Gastrocnemius medialis (tissue), 4 donors: ENCODE measurements at regions of chr3 and their contacts with region 1.

Region 1: DNA sequence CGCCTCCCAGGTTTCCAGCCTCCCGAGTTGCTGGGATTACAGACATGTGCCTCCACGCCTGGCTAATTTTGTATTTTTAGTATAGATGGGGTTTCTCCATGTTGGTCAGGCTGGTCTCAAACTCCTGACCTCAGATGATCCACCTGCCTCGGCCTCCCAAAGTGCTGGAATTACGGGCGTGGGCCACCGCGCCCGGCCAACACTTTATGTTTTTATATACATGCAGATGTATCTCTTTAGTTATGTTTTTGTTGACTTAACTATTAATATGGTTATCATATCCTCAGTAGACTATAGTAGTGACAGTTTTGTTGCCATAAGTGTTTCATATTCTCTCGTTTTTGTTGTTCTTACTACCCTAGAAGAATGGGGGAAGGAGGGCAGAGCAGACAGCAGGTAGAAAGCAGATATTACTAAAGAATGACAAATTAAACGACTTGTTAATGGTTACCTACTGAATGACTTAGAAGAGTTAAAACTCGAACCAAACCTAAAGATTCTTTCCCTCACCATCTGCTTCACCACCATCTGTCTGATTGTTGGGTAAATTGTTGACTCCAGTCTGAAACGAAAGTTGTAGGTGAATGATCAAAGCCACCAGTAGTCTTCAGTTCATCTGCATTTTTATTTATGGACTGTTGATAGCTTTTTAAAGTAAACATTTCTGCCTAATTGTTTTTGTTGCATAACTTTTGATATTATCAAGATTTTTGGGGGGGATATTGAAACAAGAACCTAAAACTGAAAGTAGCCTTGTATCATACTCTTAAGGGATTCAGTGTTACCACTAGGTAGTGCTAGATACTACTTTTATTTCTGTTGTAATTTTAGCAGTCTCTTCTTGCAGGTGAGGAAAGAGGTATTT is 89.3 kb downstream of the RASA2 start:
- DNase-seq: no peak
- ATAC-seq: no peak
- H3K4me3 ChIP-seq: no peak overlapping the region
- H3K27ac ChIP-seq: no peak overlapping the region
- H3K4me1 ChIP-seq: no peaks in the 10 kb centered on the region
- H3K27me3 ChIP-seq: no peaks in the 10 kb centered on the region
- CTCF ChIP-seq: peak in 2 of 5 experiments; percentile 34 to 41
- POLR2A ChIP-seq: no peak

Region 2: DNA sequence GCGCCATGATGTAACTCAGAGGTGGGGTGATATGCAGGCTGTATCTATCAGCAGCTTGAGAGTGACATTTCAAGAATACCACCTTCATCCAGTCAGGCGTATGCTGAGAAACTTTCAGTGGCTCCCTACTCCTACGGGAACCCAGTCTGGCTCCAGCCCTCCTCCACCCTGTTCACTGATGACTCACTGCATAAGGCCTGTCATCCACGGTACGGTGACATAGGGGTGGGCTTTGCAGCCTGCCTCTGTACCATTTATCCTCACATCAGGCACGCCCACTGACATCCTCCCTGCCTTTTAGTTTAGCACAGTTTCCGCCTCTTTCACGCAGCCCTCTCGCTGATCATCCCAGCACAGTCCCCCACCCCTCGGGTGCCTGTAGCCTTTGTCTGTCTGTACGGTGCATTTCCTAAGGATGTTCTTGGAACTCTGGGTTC is 332.8 kb before region 1 on chr3:
- in situ Hi-C with region 1: no loop called
- intact Hi-C with region 1: no loop called
- DNase-seq: no peak
- ATAC-seq: no peak
- H3K4me3 ChIP-seq: no peak overlapping the region
- H3K27ac ChIP-seq: peak overlapping the region in 1 of 4 donors; percentile 93
- H3K4me1 ChIP-seq: peaks cover 56 to 57% of the 10 kb centered on the region in 2 donors
- H3K27me3 ChIP-seq: no peaks in the 10 kb centered on the region
- CTCF ChIP-seq: no peak
- POLR2A ChIP-seq: no peak

Region 3: DNA sequence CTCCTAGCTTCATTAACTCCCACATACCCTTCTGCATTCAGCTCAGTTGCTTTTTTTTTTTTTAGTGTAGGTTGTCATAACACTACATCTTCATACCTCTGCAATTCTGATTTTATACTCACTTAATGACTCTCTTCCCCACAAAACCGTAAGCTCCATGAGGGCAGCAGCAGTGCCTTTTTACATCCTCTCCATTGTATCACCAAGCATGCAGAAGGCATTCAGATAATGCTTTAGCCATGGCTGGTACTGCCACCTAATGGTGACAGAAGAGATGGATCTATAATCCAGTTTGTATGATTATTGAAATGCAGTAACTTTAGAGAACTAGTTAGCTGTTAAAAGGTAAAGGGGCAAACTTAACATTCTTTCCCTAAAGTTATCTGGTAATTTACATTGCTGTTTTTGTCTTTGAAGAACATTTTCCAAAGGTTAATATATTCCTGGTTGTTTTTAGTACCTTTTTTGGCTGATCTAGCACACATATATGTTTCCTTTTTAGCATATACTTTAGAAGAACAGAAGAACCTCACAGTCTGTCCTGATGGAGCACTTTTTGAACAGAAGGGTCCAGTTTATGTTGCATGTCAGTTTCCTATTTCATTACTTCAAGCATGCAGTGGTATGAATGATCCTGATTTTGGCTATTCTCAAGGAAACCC is 337.2 kb after region 1 on chr3:
- in situ Hi-C with region 1: loop called in 1 of 4 experiments (anchors 10 kb)
- intact Hi-C with region 1: loop called (anchors 5 kb)
- DNase-seq: no peak
- ATAC-seq: peak; percentile 66 to 72
- H3K4me3 ChIP-seq: no peak overlapping the region
- H3K27ac ChIP-seq: no peak overlapping the region
- H3K4me1 ChIP-seq: no peaks in the 10 kb centered on the region
- H3K27me3 ChIP-seq: no peaks in the 10 kb centered on the region
- CTCF ChIP-seq: peak; percentile 22 to 70 (median 61)
- POLR2A ChIP-seq: no peak